B cell (primary cell): ENCODE measurements at regions of chr16 and their contacts with region 1.

Region 1: GRCh38 chr16:11586856-11587642 is at the start of gene LITAF:
- DNase-seq: peak; percentile 78
- ATAC-seq: peak; percentile 59
- H3K4me3 ChIP-seq: peak within 1 kb of the TSS; percentile 71 to 91 (median 75)
- H3K4me3 Mint-ChIP-seq: peak within 1 kb of the TSS; percentile 94
- H3K27ac ChIP-seq: peak within 1 kb of the TSS; percentile 82 to 97
- H3K27ac Mint-ChIP-seq: peak within 1 kb of the TSS; percentile 97
- H3K4me1 ChIP-seq: peaks cover 42 to 50% of the 10 kb centered on the region in 2 donors
- H3K4me1 Mint-ChIP-seq: peaks cover 48% of the 10 kb centered on the region
- H3K27me3 ChIP-seq: no peaks in the 10 kb centered on the region
- H3K27me3 Mint-ChIP-seq: no peaks in the 10 kb centered on the region
- CTCF ChIP-seq: no peak
- total RNA-seq, gene LITAF: 125 and 131 TPM in 2 replicates

Region 2: GRCh38 chr16:11535471-11535870 is 51.6 kb before region 1 on chr16:
- CTCF ChIA-PET with region 1: interaction called, 10 read pairs
- POLR2A ChIA-PET with region 1: no interaction called
- intact Hi-C with region 1: loop called (anchors 2 kb)
- DNase-seq: no peak
- ATAC-seq: no peak
- H3K4me3 ChIP-seq: no peak overlapping the region
- H3K4me3 Mint-ChIP-seq: no peak overlapping the region
- H3K27ac ChIP-seq: no peak overlapping the region
- H3K27ac Mint-ChIP-seq: no peak overlapping the region
- H3K4me1 ChIP-seq: no peaks in the 10 kb centered on the region
- H3K4me1 Mint-ChIP-seq: peaks cover 5% of the 10 kb centered on the region
- H3K27me3 ChIP-seq: no peaks in the 10 kb centered on the region
- H3K27me3 Mint-ChIP-seq: no peaks in the 10 kb centered on the region
- CTCF ChIP-seq: no peak

Region 3: DNA sequence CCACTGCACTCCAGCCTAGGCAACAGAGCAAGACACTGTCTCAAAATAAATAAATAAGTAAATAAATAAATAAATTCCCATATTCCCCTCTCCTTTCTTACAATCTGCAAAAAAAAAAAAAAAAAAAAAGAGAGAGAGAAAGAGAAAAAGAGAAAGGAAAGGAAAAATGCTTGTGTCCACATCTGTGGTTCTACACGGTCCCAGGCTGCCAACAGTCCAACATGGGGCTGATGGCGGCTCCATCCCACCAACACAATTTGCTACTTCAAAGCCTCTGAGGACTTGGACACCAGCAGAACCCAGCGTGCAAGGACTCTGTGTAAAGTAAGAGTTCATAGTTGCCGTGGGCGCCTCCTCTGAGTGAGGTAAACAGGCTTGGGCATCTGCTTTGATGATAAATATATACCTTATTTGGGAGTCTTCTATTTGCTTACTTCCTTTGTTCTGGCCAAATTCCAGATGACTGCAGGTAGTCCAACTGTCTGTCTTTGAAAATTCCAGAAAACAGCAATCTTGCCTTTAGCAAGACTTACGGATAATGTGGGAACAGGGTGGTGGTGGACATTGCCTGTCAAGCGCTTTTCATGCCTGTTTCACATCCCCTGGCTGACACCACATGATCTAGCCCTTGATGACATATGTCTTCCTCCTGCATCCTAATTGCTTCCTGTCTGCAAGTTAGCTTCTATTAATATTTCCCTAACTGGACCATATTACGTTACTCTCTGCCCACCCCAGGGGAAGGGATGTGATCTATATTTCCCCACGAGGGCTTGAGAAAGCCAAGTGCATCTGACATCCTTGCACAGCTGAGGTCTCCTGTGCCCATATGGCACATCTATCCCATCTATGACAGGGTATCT is 10.4 kb before region 1 on chr16:
- CTCF ChIA-PET with region 1: interaction called, 3 read pairs
- POLR2A ChIA-PET with region 1: interaction called, 8 read pairs
- intact Hi-C with region 1: loop called (anchors 1 kb)
- DNase-seq: peak; percentile 85
- ATAC-seq: peak; percentile 66
- H3K4me3 ChIP-seq: peak overlapping the region in 1 of 5 experiments; percentile 15
- H3K4me3 Mint-ChIP-seq: peak overlapping the region; percentile 86
- H3K27ac ChIP-seq: peak overlapping the region in 1 of 2 donors; percentile 65
- H3K27ac Mint-ChIP-seq: peak overlapping the region; percentile 89
- H3K4me1 ChIP-seq: peaks cover 65 to 82% of the 10 kb centered on the region in 2 donors
- H3K4me1 Mint-ChIP-seq: peaks cover 79% of the 10 kb centered on the region
- H3K27me3 ChIP-seq: no peaks in the 10 kb centered on the region
- H3K27me3 Mint-ChIP-seq: no peaks in the 10 kb centered on the region
- CTCF ChIP-seq: no peak

Region 4: DNA sequence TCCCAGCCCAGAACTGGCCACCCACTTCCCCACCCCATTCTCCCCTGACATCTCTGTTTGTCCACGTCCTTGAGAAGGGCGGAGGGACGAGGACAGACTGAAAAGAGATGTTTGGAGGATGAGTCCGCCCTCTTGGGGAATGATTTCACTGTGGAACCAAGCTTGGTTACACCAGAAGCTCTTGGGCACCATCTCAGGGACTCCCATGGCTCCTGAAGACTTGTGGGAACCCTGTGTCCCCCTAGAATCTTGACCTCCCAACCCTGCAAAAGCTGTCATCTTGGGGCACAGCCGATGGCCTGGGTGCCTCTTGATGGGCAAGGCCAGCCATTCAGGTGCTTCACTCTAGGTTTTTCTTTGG is 25.6 kb after region 1 on chr16:
- CTCF ChIA-PET with region 1: interaction called, 3 read pairs
- POLR2A ChIA-PET with region 1: interaction called, 10 read pairs
- intact Hi-C with region 1: no loop called
- DNase-seq: no peak
- ATAC-seq: no peak
- H3K4me3 ChIP-seq: no peak overlapping the region
- H3K4me3 Mint-ChIP-seq: peak overlapping the region; percentile 75
- H3K27ac ChIP-seq: no peak overlapping the region
- H3K27ac Mint-ChIP-seq: peak overlapping the region; percentile 63
- H3K4me1 ChIP-seq: peaks cover 30 to 32% of the 10 kb centered on the region in 2 donors
- H3K4me1 Mint-ChIP-seq: peaks cover 41% of the 10 kb centered on the region
- H3K27me3 ChIP-seq: peaks cover 0 to 4% (median 0%) of the 10 kb centered on the region in 4 experiments
- H3K27me3 Mint-ChIP-seq: no peaks in the 10 kb centered on the region
- CTCF ChIP-seq: no peak

Region 5: GRCh38 chr16:11621920-11622651 is 35.0 kb after region 1 on chr16:
- CTCF ChIA-PET with region 1: interaction called, 8 read pairs
- POLR2A ChIA-PET with region 1: interaction called, 4 read pairs
- intact Hi-C with region 1: loop called (anchors 5 kb)
- DNase-seq: peak; percentile 54
- ATAC-seq: peak; percentile 63
- H3K4me3 ChIP-seq: peak overlapping the region in 4 of 5 experiments; percentile 9 to 63 (median 36)
- H3K4me3 Mint-ChIP-seq: peak overlapping the region; percentile 77
- H3K27ac ChIP-seq: peak overlapping the region; percentile 68 to 84
- H3K27ac Mint-ChIP-seq: peak overlapping the region; percentile 85
- H3K4me1 ChIP-seq: peaks cover 52 to 75% of the 10 kb centered on the region in 2 donors
- H3K4me1 Mint-ChIP-seq: peaks cover 52% of the 10 kb centered on the region
- H3K27me3 ChIP-seq: no peaks in the 10 kb centered on the region
- H3K27me3 Mint-ChIP-seq: no peaks in the 10 kb centered on the region
- CTCF ChIP-seq: no peak

Region 6: DNA sequence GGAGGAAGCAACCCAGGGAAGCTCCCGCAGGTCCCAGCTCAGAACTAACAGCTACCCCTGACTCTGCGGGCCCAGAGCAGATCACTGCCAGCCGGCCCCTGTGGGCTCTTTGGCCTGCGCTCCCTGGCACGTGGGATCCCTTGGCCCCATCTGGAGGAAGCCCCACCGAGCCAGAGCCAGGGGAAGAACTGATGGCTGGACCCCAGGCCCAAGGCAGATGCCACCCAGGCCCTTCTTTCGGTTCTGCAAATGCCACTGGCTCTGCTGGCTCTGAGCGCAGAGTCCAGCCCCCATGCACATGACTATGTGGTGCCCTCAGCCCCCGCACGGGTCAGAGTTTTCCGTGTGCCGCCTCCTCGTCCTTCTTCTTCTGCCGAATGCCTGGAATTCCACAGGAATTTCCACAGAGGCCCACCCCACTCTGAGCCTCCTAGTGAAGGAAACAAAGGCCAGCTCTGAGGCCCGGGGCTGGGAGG is 45.5 kb after region 1 on chr16:
- CTCF ChIA-PET with region 1: interaction called, 3 read pairs
- POLR2A ChIA-PET with region 1: interaction called, 14 read pairs
- intact Hi-C with region 1: no loop called
- DNase-seq: no peak
- ATAC-seq: no peak
- H3K4me3 ChIP-seq: no peak overlapping the region
- H3K4me3 Mint-ChIP-seq: no peak overlapping the region
- H3K27ac ChIP-seq: no peak overlapping the region
- H3K27ac Mint-ChIP-seq: no peak overlapping the region
- H3K4me1 ChIP-seq: peaks cover 22 to 41% of the 10 kb centered on the region in 2 donors
- H3K4me1 Mint-ChIP-seq: peaks cover 33% of the 10 kb centered on the region
- H3K27me3 ChIP-seq: no peaks in the 10 kb centered on the region
- H3K27me3 Mint-ChIP-seq: no peaks in the 10 kb centered on the region
- CTCF ChIP-seq: no peak

Region 7: GRCh38 chr16:11682655-11683096 is 95.6 kb after region 1 on chr16:
- CTCF ChIA-PET with region 1: no interaction called
- POLR2A ChIA-PET with region 1: no interaction called
- intact Hi-C with region 1: loop called (anchors 2 kb)
- DNase-seq: peak; percentile 85
- ATAC-seq: peak; percentile 5
- H3K4me3 ChIP-seq: peak overlapping the region in 2 of 5 experiments; percentile 0 to 35
- H3K4me3 Mint-ChIP-seq: peak overlapping the region; percentile 78
- H3K27ac ChIP-seq: peak overlapping the region; percentile 95 to 99
- H3K27ac Mint-ChIP-seq: peak overlapping the region; percentile 91
- H3K4me1 ChIP-seq: peaks cover 96 to 97% of the 10 kb centered on the region in 2 donors
- H3K4me1 Mint-ChIP-seq: peaks cover 96% of the 10 kb centered on the region
- H3K27me3 ChIP-seq: no peaks in the 10 kb centered on the region
- H3K27me3 Mint-ChIP-seq: no peaks in the 10 kb centered on the region
- CTCF ChIP-seq: no peak